ENCODE measurements at regions of chr10 and their contacts with region 1.

Region 1: DNA sequence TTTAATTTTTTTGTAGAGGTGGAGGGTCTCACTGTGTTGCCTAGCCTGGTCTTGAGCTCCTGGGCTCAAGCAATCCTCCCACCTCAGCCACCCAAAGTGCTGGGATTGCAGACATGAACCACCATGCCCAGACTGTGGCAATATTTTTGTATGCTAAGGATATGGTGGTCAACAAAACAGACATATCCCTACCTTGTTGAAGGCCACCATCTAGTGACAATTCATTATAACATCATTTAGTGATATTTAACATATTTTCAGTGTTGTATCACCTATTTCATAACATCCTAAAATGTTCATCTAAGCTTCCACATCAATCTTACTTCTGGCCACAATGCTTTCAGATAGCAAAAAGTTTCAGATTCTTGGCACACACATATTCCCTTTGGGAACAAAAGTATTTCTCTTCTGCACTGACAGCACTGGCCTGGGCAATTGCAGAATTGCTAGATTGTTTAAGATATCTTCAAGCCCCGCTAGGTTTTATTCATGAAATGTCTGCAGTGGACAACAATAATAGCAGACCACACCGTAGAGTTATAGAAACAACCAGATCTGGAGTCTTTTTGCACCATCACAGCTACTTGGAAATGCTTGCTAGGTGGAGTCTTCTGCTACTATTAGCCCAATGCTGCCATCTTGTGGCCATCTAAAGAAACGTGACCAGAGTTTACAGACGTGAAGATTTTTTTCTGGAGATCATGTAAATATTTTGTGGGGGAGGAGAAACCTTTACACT is 58.4 kb downstream of the DNAJC12 start:
- DNase-seq: peak; percentile 72 to 81 (median 77)
- H3K4me3 ChIP-seq: no peak overlapping the region
- H3K4me3 Mint-ChIP-seq: peak overlapping the region in 1 of 8 donors; percentile 4
- H3K27ac ChIP-seq: no peak overlapping the region
- H3K27ac Mint-ChIP-seq: peak overlapping the region in 2 of 7 donors; percentile 19 to 29
- H3K4me1 ChIP-seq: peaks cover 21% of the 10 kb centered on the region
- H3K4me1 Mint-ChIP-seq: peaks cover 23 to 27% (median 25%) of the 10 kb centered on the region in 4 donors
- H3K27me3 ChIP-seq: no peaks in the 10 kb centered on the region
- H3K27me3 Mint-ChIP-seq: no peaks in the 10 kb centered on the region

Region 2: DNA sequence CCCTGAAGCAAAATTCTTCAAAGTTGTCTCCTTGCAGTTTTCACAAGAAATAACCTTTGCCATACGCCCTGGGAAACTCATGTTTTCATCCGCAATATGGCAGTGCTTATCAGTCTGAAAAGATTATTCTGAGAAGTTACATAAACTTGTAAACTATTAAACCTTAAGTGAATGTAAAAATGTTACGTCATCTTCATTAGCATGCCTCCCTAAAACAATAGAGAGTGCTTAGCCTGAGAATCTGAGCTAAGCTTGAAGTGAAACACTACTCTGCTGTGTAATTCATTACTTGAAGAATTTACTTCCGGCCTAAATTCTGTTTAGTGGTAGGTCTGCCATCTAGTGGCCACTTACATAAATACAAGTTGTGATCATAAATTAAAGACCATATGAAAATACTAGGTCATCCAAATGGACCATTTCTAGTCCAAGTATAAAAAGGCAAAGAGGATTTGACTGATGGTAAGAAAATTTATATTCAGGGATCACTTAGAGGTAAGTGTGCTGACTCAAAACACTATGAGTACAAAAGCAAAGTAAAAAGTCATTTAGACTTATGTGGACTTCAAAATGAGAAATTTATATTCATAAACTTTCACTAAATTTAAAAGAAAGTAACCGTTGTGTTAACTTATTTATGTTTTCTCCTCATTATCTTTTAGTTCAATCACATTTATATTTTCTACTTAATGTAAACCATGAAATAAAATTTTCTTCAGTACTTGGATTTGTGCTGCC is 1598.9 kb before region 1 on chr10:
- CTCF ChIA-PET with region 1: no interaction called
- POLR2A ChIA-PET with region 1: no interaction called
- intact Hi-C with region 1: loop called (anchors 5 kb)
- DNase-seq: peak in 4 of 5 donors; percentile 35 to 45 (median 43)
- H3K4me3 ChIP-seq: no peak overlapping the region
- H3K4me3 Mint-ChIP-seq: no peak overlapping the region
- H3K27ac ChIP-seq: no peak overlapping the region
- H3K27ac Mint-ChIP-seq: no peak overlapping the region
- H3K4me1 ChIP-seq: no peaks in the 10 kb centered on the region
- H3K4me1 Mint-ChIP-seq: peaks cover 0 to 3% (median under 1%) of the 10 kb centered on the region in 4 donors
- H3K27me3 ChIP-seq: no peaks in the 10 kb centered on the region
- H3K27me3 Mint-ChIP-seq: no peaks in the 10 kb centered on the region

Region 3: DNA sequence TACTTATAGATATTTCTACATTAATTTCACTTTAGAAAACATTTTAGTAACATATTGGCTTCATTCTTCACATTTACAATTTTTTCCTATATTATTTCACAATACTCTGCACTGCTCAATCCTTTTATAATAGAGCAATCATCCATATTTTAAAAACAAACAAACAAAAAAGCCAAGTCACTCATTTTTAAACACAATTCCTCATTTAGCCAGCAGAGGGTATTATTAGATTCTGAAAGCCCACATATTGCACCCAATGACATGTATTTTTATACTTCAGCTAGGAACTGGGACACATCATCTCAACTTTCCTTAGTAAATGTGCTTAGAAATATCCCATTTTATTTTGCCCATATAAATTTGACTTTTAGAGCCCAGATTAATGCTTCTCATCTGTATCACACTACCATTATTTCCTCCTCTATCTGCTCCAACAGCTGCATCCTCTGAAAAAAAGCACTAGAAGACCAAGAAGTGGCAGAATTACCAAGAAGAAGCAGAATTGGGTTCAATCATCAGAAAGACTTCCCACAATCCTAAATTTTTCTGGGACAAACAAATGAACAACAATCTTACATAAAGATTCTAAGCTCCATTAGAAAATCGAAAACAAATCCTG is 113.1 kb before region 1 on chr10:
- CTCF ChIA-PET with region 1: interaction called, 114 read pairs
- POLR2A ChIA-PET with region 1: interaction called, 4 read pairs
- intact Hi-C with region 1: loop called (anchors 1 kb)
- DNase-seq: peak in 4 of 5 donors; percentile 12 to 31 (median 21)
- H3K4me3 ChIP-seq: no peak overlapping the region
- H3K4me3 Mint-ChIP-seq: no peak overlapping the region
- H3K27ac ChIP-seq: no peak overlapping the region
- H3K27ac Mint-ChIP-seq: no peak overlapping the region
- H3K4me1 ChIP-seq: no peaks in the 10 kb centered on the region
- H3K4me1 Mint-ChIP-seq: no peaks in the 10 kb centered on the region
- H3K27me3 ChIP-seq: no peaks in the 10 kb centered on the region
- H3K27me3 Mint-ChIP-seq: no peaks in the 10 kb centered on the region

Region 4: DNA sequence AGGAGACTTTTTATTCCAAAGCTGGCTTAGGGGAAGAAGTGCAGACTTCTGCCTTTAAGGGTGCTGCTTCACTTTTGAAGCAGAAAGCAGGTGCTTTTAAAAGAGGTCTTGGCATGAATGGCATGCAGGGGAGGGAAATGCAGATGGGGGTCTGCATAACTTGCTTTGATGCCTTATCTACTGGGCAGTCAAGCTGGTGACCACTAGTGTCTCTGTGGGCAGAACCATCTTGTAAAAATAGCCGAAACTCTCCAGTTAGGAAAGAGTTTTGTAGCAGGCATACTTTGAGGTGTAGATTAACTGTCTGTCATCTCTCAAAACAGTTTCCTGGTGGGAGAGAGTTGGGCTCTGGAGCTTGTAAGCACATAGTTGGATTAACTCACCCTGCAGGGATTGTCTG is 73.7 kb before region 1 on chr10:
- CTCF ChIA-PET with region 1: interaction called, 433 read pairs
- POLR2A ChIA-PET with region 1: no interaction called
- intact Hi-C with region 1: no loop called
- DNase-seq: no peak
- H3K4me3 ChIP-seq: no peak overlapping the region
- H3K4me3 Mint-ChIP-seq: no peak overlapping the region
- H3K27ac ChIP-seq: no peak overlapping the region
- H3K27ac Mint-ChIP-seq: no peak overlapping the region
- H3K4me1 ChIP-seq: no peaks in the 10 kb centered on the region
- H3K4me1 Mint-ChIP-seq: no peaks in the 10 kb centered on the region
- H3K27me3 ChIP-seq: no peaks in the 10 kb centered on the region
- H3K27me3 Mint-ChIP-seq: peaks cover 1 to 6% of the 10 kb centered on the region in 2 donors

Region 5: GRCh38 chr10:67764012-67764822 is 15.4 kb before region 1 on chr10:
- CTCF ChIA-PET with region 1: interaction called, 60 read pairs
- POLR2A ChIA-PET with region 1: interaction called, 20 read pairs
- intact Hi-C with region 1: loop called (anchors 1 kb)
- DNase-seq: peak; percentile 96 to 99 (median 97)
- H3K4me3 ChIP-seq: peak overlapping the region; percentile 58 to 98
- H3K4me3 Mint-ChIP-seq: peak overlapping the region; percentile 90 to 98 (median 95)
- H3K27ac ChIP-seq: peak overlapping the region; percentile 73
- H3K27ac Mint-ChIP-seq: peak overlapping the region; percentile 98 to 100 (median 99)
- H3K4me1 ChIP-seq: peaks cover 14% of the 10 kb centered on the region
- H3K4me1 Mint-ChIP-seq: peaks cover 9 to 28% (median 14%) of the 10 kb centered on the region in 4 donors
- H3K27me3 ChIP-seq: no peaks in the 10 kb centered on the region
- H3K27me3 Mint-ChIP-seq: peaks cover 4 to 9% of the 10 kb centered on the region in 2 donors